ENCODE measurements at regions of chr1 and their contacts with region 1.

Region 1: DNA sequence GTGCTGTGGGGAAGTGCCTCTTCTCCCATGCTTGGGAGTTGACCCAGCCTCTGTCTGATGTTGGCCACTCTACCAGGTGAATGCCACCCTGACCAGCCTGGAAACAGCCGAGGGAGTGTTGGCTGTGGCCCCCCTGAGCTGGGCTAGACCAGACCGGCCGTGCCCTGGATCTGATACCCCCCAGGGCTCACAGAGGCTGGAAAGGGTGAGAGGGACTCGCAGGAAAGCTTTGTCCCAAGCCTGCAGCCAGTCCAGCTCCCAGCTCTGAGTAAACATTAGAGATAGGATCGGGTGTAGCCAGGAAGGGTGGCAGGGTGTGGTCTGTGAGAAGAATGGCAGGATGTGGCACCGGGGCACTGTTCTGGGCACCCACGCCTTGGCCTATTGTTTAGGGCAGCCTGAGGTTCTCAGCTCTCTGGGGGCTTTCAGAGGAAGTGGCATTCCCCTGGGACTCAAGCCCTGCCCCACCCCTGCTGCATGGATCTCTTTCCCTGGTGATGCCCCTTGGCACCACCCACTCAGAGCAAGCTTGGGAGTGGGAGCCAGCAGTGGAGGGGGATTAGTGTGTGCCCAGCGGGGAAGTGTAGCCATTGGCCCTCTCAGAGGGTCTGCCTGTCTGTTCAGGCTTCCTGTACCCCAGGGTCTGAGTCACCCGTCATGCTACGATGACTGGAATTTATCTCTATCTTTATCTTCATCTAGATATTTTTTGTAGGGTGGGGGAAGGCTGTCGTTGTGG is 31.4 kb downstream of the SOX13 start:
- DNase-seq: peak; percentile 96
- ATAC-seq: peak; percentile 78
- H3K4me3 ChIP-seq: peak overlapping the region; percentile 38; the same call in 1 of the 2 replicates
- H3K27ac ChIP-seq: peak overlapping the region; percentile 97
- H3K4me1 ChIP-seq: peaks cover 58% of the 10 kb centered on the region
- H3K27me3 ChIP-seq: no peaks in the 10 kb centered on the region
- CTCF ChIP-seq: no peak

Region 2: GRCh38 chr1:204072931-204073836 is 31.1 kb before region 1 on chr1 and contains the start of gene SOX13:
- CTCF ChIA-PET with region 1: interaction called, 3 read pairs
- POLR2A ChIA-PET with region 1: no interaction called
- intact Hi-C with region 1: loop called (anchors 2 kb)
- DNase-seq: peak; percentile 89
- ATAC-seq: peak; percentile 78
- H3K4me3 ChIP-seq: peak within 1 kb of the TSS; percentile 88
- H3K27ac ChIP-seq: peak within 1 kb of the TSS; percentile 57
- H3K4me1 ChIP-seq: peaks cover 27% of the 10 kb centered on the region
- H3K27me3 ChIP-seq: no peaks in the 10 kb centered on the region
- CTCF ChIP-seq: peak; percentile 32
- total RNA-seq, gene SOX13: 81.9 and 93.1 TPM in 2 replicates

Region 3: GRCh38 chr1:204080163-204080903 is 24.0 kb before region 1 on chr1:
- CTCF ChIA-PET with region 1: interaction called, 3 read pairs
- POLR2A ChIA-PET with region 1: no interaction called
- intact Hi-C with region 1: loop called (anchors 1 kb)
- DNase-seq: peak; percentile 96
- ATAC-seq: peak; percentile 87
- H3K4me3 ChIP-seq: peak overlapping the region; percentile 53
- H3K27ac ChIP-seq: peak overlapping the region; percentile 69
- H3K4me1 ChIP-seq: peaks cover 75% of the 10 kb centered on the region
- H3K27me3 ChIP-seq: no peaks in the 10 kb centered on the region
- CTCF ChIP-seq: no peak; the same call in 1 of the 2 replicates

Region 4: DNA sequence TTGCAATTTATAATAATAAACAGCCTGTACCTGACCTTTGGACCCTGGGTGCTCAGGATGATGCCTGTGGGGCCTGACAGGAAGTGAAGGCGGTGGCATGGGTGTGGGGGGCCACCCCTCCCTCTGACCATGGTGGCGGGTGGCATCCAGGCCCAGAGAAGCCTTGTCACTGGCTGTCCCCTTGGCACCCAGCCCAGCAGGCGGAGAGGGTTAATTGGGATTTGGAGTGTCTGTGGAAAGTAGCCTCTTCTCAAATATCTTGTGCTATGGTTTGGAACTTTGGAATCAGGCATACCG is 10.9 kb before region 1 on chr1:
- CTCF ChIA-PET with region 1: no interaction called
- POLR2A ChIA-PET with region 1: no interaction called
- intact Hi-C with region 1: no loop called
- DNase-seq: no peak
- ATAC-seq: no peak
- H3K4me3 ChIP-seq: no peak overlapping the region
- H3K27ac ChIP-seq: no peak overlapping the region
- H3K4me1 ChIP-seq: peaks cover 27% of the 10 kb centered on the region
- H3K27me3 ChIP-seq: no peaks in the 10 kb centered on the region
- CTCF ChIP-seq: no peak